ENCODE measurements at regions of chr2 and their contacts with region 1.

Region 1: DNA sequence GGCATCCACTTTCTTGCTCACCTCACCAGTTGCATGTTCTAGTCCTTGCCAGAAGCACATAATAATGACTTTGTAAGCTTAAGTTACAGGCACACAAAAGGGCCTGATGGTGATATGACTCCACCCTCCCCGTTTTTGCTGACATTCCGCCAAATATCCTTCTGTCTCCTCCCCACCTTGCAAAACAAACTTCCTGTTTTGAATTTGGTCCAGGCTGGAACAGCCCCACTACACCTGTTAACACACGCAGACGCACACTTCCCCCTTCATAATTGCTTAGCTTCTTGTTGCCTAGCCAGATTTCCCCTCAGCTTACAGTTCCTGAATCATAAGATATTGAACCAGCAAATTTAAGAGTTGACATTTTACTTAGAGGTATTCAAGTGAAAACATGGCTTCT is at the start of gene MGAT5:
- DNase-seq: no peak
- H3K4me3 Mint-ChIP-seq: no peak within 1 kb of the TSS
- H3K27ac Mint-ChIP-seq: no peak within 1 kb of the TSS
- H3K4me1 Mint-ChIP-seq: peaks cover 63% of the 10 kb centered on the region
- H3K27me3 Mint-ChIP-seq: peaks cover 19% of the 10 kb centered on the region
- total RNA-seq, gene MGAT5: 25.8 and 26.2 TPM in 2 replicates

Region 2: GRCh38 chr2:134079373-134079772 is 174.4 kb before region 1 on chr2:
- intact Hi-C with region 1: no loop called
- DNase-seq: no peak
- H3K4me3 Mint-ChIP-seq: no peak overlapping the region
- H3K27ac Mint-ChIP-seq: no peak overlapping the region
- H3K4me1 Mint-ChIP-seq: no peaks in the 10 kb centered on the region
- H3K27me3 Mint-ChIP-seq: peaks cover 9% of the 10 kb centered on the region

Region 3: DNA sequence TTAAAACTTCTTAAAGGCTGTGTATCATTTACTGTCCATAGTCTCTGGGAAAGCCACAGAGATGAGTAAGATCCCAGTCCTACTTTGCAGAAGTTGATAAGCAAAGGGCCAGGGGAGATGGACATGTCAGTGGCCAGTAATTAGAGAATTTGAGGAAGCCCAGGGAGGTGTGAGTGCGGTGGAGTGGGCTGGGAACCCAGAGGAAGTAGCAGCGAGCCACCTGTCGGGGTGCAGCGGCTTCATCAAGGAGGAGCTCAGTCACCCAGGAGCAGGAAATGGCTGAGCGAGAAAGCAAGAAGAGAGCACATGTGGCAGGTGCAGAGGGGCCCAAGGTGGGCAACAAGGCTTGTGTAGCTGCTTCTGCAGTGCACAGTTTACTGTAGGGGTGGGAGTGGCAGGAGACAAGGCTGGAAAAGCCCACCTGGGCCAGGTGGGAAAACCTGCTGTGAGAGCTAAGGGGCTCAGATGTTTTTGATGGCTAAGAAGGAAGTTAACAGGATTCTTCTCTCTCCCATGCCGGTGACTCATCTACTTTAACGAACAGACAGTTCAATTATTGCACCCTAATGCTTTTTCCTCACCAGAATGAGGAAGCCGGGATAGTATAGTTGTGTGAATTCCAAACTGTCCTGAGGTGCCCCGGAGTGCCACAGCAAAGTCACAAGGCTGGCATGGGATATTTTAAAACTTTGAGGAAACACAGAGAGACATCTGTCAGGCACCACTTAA is 34.7 kb before region 1 on chr2:
- intact Hi-C with region 1: loop called (anchors 1 kb)
- DNase-seq: peak; percentile 11
- H3K4me3 Mint-ChIP-seq: no peak overlapping the region
- H3K27ac Mint-ChIP-seq: peak overlapping the region; percentile 75
- H3K4me1 Mint-ChIP-seq: peaks cover 40% of the 10 kb centered on the region
- H3K27me3 Mint-ChIP-seq: peaks cover 9% of the 10 kb centered on the region

Region 4: DNA sequence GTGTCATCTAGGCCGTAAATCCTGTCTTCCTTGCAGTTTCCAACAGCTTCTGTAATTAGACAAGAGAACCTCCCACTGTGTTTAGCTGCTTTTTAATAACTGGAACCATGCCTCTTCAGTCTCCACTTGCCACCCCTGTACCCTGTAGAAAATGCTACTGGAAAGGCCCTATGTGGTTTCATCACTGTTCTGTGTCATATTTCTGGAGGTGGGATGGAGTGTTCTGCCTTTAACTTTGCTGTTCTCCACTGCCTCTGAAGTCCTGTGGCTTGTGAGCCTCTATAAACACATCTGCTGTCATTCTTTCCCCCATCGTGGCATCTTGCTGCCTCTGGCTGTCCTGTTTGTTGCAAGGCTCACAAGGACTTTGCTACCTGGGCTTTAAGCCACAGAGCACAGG is 18.0 kb after region 1 on chr2:
- intact Hi-C with region 1: loop called (anchors 2 kb)
- DNase-seq: no peak
- H3K4me3 Mint-ChIP-seq: no peak overlapping the region
- H3K27ac Mint-ChIP-seq: peak overlapping the region; percentile 53
- H3K4me1 Mint-ChIP-seq: peaks cover 19% of the 10 kb centered on the region
- H3K27me3 Mint-ChIP-seq: peaks cover 2% of the 10 kb centered on the region

Region 5: GRCh38 chr2:134290358-134290757 is 36.6 kb after region 1 on chr2:
- intact Hi-C with region 1: loop called (anchors 2 kb)
- DNase-seq: peak; percentile 9
- H3K4me3 Mint-ChIP-seq: no peak overlapping the region
- H3K27ac Mint-ChIP-seq: no peak overlapping the region
- H3K4me1 Mint-ChIP-seq: peaks cover 26% of the 10 kb centered on the region
- H3K27me3 Mint-ChIP-seq: peaks cover 10% of the 10 kb centered on the region

Region 6: GRCh38 chr2:134609924-134610513 is 356.2 kb after region 1 on chr2:
- intact Hi-C with region 1: no loop called
- DNase-seq: no peak
- H3K4me3 Mint-ChIP-seq: no peak overlapping the region
- H3K27ac Mint-ChIP-seq: no peak overlapping the region
- H3K4me1 Mint-ChIP-seq: no peaks in the 10 kb centered on the region
- H3K27me3 Mint-ChIP-seq: peaks cover 2% of the 10 kb centered on the region

Region 7: DNA sequence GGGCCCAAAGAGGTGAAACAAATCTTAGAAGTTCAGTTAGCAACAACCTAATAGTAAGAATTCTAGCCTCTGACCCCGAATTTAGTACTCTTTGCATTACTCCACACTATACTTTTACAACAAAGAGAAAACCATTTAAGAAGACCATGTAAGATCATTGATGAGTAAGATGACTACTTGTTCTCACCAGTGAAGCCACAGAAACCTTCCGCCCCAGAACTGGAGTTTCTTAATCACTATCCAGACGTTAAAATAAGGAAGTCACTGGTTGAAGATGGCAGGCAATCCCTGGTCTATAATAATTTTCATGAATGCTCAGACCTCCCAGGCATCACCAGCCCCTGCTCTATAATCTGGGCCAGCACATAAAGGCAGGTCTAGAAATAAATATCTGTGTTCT is 370.0 kb after region 1 on chr2:
- intact Hi-C with region 1: loop called (anchors 5 kb)
- DNase-seq: no peak
- H3K4me3 Mint-ChIP-seq: no peak overlapping the region
- H3K27ac Mint-ChIP-seq: no peak overlapping the region
- H3K4me1 Mint-ChIP-seq: peaks cover 9% of the 10 kb centered on the region
- H3K27me3 Mint-ChIP-seq: peaks cover 6% of the 10 kb centered on the region

Measured in activated T-helper 1 cell treated with anti-CD3 and anti-CD28 coated beads, Interleukin-12 subunit alpha, Interleukin-12 subunit beta, Interleukin-2, Interleukin-4 antibody, amounts not matched to agents 30 ng/mL and 10 ng/mL and 1 ng/mL, durations not matched to agents 14 hours and 24 hours and 36 hours (primary cell).